ENCODE measurements at regions of chr17 and their contacts with region 1.

Region 1: GRCh38 chr17:18038861-18039534 is at the starts of genes ATPAF2 and GID4:
- DNase-seq: peak; percentile 100
- H3K4me3 ChIP-seq: peak within 1 kb of the TSS; percentile 68 to 94 (median 83)
- H3K27ac ChIP-seq: peak within 1 kb of the TSS; percentile 83 to 92 (median 90)
- H3K4me1 ChIP-seq: peaks cover 20 to 35% (median 28%) of the 10 kb centered on the region in 4 donors
- H3K27me3 ChIP-seq: no peaks in the 10 kb centered on the region
- CTCF ChIP-seq: peak in 1 of 5 experiments; percentile 27
- EP300 ChIP-seq: no peak
- POLR2A ChIP-seq: peak; percentile 54
- total RNA-seq, gene ATPAF2: 17.3 to 65.1 (median 24.7) TPM
- total RNA-seq, gene GID4: 7.0 to 39.6 (median 9.4) TPM

Region 2: GRCh38 chr17:17675925-17676534 is 363.0 kb before region 1 on chr17:
- in situ Hi-C with region 1: loop called in 3 of 4 experiments (anchors 5 to 25 kb)
- intact Hi-C with region 1: no loop called
- DNase-seq: no peak
- H3K4me3 ChIP-seq: no peak overlapping the region
- H3K27ac ChIP-seq: no peak overlapping the region
- H3K4me1 ChIP-seq: peaks cover 0 to 6% (median 1%) of the 10 kb centered on the region in 4 donors
- H3K27me3 ChIP-seq: no peaks in the 10 kb centered on the region
- CTCF ChIP-seq: no peak
- EP300 ChIP-seq: no peak
- POLR2A ChIP-seq: no peak

Region 3: GRCh38 chr17:17681187-17681848 is 357.7 kb before region 1 on chr17 and contains the start of gene RAI1:
- in situ Hi-C with region 1: loop called in 3 of 4 experiments (anchors 5 to 25 kb)
- intact Hi-C with region 1: no loop called
- DNase-seq: peak; percentile 80
- H3K4me3 ChIP-seq: peak within 1 kb of the TSS; percentile 49 to 90 (median 74)
- H3K27ac ChIP-seq: peak within 1 kb of the TSS; percentile 89 to 98 (median 92)
- H3K4me1 ChIP-seq: peaks cover 17 to 36% (median 26%) of the 10 kb centered on the region in 4 donors
- H3K27me3 ChIP-seq: no peaks in the 10 kb centered on the region
- CTCF ChIP-seq: peak in 4 of 5 experiments; percentile 42 to 74 (median 64)
- EP300 ChIP-seq: no peak
- POLR2A ChIP-seq: no peak
- total RNA-seq, gene RAI1: 14.1 to 163 (median 34.6) TPM

Region 4: DNA sequence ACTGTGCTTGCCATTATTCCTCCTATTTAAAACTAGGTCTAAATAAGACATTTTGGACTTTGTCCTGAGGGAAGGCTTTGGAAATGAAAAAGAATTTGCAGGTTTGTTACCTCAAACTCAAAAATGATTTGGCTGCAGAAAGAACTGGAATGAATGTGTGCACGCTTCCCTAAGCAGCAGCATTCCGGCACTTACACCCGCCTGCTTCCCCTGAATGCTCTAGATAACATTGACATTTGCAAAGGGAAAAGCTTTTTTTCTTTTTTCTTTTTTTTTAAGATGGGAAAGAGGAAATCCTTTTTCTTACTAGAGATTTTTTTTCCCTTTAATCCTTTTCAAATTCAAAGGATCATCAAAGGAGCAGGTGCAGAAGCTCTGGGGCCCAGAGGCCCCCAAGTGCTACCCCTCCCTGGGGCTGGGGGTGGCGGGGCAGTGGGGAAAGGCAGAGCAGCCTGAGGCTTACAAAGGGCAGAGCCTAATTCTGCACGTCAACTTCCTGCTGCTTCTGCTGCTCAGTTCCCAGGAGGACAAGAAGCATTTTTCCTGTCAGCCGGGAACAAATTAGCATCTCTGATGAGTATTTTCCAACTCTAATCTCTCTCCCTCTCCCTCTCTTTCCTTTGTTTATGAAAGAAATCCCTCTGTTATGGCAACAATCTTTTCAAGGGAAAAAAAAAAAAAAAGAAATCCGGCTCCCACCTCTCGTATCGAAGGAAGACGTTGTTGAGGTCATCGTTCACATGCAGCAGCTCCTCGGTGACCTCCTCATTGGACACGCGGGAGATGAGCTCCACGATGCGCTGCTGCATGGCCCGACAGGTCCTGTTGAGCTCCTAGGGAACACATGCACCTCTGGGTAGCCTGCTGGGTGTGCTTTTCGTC is 170.1 kb before region 1 on chr17:
- in situ Hi-C with region 1: no loop called
- intact Hi-C with region 1: loop called (anchors 5 kb)
- DNase-seq: no peak
- H3K4me3 ChIP-seq: no peak overlapping the region
- H3K27ac ChIP-seq: peak overlapping the region; percentile 2 to 41 (median 34)
- H3K4me1 ChIP-seq: peaks cover 0 to 9% (median 2%) of the 10 kb centered on the region in 4 donors
- H3K27me3 ChIP-seq: no peaks in the 10 kb centered on the region
- CTCF ChIP-seq: no peak
- EP300 ChIP-seq: no peak
- POLR2A ChIP-seq: no peak

Region 5: GRCh38 chr17:17890773-17891759 is 147.9 kb before region 1 on chr17:
- in situ Hi-C with region 1: loop called in 3 of 4 experiments (anchors 10 to 25 kb)
- intact Hi-C with region 1: no loop called
- DNase-seq: peak; percentile 50
- H3K4me3 ChIP-seq: no peak overlapping the region
- H3K27ac ChIP-seq: no peak overlapping the region
- H3K4me1 ChIP-seq: peaks cover 0 to 2% (median 0%) of the 10 kb centered on the region in 4 donors
- H3K27me3 ChIP-seq: no peaks in the 10 kb centered on the region
- CTCF ChIP-seq: peak; percentile 49 to 78 (median 61)
- EP300 ChIP-seq: no peak
- POLR2A ChIP-seq: no peak

Region 6: DNA sequence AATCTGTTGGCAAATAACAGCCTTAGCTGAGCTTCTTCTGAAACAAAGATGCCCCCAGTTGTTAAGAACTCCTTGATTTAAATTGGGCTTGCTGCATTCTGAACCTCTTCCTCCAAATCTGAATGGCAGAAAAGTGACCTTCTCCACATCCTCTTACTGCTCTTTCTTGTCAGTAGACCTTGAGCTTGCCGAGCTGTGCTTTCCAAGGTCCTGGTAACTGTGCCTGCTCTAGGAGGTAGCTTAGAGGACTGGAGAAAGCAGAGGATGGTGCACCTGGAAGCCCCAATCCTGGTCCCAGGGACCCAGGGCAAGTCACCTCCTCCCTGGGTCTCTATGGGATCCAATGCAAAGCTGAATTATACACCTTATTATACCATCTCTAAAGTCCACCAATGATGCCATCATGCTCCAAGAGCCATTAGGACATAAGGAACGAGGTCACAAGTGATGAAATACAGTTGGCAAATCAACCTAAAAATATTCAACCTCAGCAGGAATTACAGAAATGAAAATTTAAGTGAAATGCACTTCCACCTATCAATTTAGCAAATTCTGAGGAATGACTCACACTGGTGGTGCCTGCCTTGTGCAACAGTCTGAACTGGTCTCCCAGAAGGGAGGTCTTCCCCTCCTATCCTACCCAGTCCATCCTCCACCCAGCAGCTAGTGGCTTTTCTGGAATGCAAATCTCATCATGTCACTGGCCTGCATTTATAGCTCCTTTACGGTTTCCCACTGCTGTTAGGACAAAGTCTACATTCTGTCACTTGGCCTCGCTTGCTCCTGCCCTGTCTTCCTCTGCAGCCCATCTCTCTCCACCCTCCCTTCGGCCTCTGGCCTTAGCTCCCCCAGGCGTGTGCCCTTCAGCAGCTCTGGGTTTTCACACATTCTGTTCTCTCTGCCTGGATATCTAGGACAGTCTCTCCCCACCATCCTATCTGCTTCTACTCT is 103.4 kb before region 1 on chr17:
- in situ Hi-C with region 1: no loop called
- intact Hi-C with region 1: no loop called
- DNase-seq: peak; percentile 53
- H3K4me3 ChIP-seq: no peak overlapping the region
- H3K27ac ChIP-seq: peak overlapping the region; percentile 45 to 69 (median 55)
- H3K4me1 ChIP-seq: peaks cover 30 to 66% (median 49%) of the 10 kb centered on the region in 4 donors
- H3K27me3 ChIP-seq: no peaks in the 10 kb centered on the region
- CTCF ChIP-seq: no peak
- EP300 ChIP-seq: no peak
- POLR2A ChIP-seq: no peak

Region 7: DNA sequence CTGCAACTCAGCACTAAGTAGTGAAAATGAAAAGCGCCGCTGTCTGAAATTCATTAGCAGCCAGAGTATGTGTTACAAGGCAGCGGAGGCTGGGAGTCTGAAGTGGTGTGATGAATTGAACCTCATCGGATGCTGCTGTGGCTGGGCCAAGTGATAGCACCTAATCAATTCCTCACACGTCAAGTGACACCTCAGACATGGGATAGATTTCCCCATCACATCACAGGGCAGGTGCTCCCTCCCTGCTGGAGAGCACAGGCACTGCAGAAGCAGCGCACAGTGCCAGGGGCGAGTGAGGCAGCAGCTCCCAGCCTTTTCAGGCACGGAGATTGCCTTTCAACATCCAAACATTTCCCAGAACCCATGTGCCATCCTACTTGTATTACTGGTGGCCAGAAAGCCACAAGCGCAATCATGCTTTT is 34.1 kb before region 1 on chr17:
- in situ Hi-C with region 1: no loop called
- intact Hi-C with region 1: no loop called
- DNase-seq: no peak
- H3K4me3 ChIP-seq: no peak overlapping the region
- H3K27ac ChIP-seq: no peak overlapping the region
- H3K4me1 ChIP-seq: peaks cover 0 to 4% (median 0%) of the 10 kb centered on the region in 4 donors
- H3K27me3 ChIP-seq: no peaks in the 10 kb centered on the region
- CTCF ChIP-seq: no peak
- EP300 ChIP-seq: no peak
- POLR2A ChIP-seq: no peak

Region 8: DNA sequence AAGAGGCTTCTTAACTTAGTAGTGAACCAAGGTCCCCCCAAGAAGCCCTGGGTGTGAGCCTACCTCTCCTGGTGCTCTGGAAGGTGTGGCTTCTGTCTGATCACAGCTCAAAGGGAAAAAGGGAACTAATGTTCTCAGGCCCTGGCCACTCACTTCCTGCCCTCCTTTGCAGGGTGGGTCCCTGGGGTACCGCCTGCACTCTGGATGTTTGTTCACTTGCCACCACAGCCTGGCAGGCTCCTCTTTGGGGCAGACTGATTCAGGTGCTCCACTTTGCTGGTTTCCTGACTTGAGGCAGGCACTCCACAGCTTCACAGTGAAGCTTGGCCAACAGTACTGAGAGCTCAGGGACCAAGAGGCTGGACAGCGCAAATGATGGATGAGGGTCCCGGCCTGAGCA is 63.6 kb after region 1 on chr17:
- in situ Hi-C with region 1: no loop called
- intact Hi-C with region 1: no loop called
- DNase-seq: no peak
- H3K4me3 ChIP-seq: no peak overlapping the region
- H3K27ac ChIP-seq: no peak overlapping the region
- H3K4me1 ChIP-seq: no peaks in the 10 kb centered on the region
- H3K27me3 ChIP-seq: no peaks in the 10 kb centered on the region
- CTCF ChIP-seq: no peak
- EP300 ChIP-seq: no peak
- POLR2A ChIP-seq: no peak

Region 9: GRCh38 chr17:18141210-18141803 is 102.3 kb after region 1 on chr17:
- in situ Hi-C with region 1: no loop called
- intact Hi-C with region 1: no loop called
- DNase-seq: no peak
- H3K4me3 ChIP-seq: no peak overlapping the region
- H3K27ac ChIP-seq: no peak overlapping the region
- H3K4me1 ChIP-seq: no peaks in the 10 kb centered on the region
- H3K27me3 ChIP-seq: peaks cover 6% of the 10 kb centered on the region
- CTCF ChIP-seq: peak; percentile 55 to 71 (median 67)
- EP300 ChIP-seq: no peak
- POLR2A ChIP-seq: no peak

Measured in transverse colon (tissue), 4 donors.